HCT116 (cell line): ENCODE measurements at regions of chr21 and their contacts with region 1.

Region 1: GRCh38 chr21:36989699-36990507 is 16.6 kb upstream of the RIPPLY3 start:
- DNase-seq: peak; percentile 81
- ATAC-seq: peak; percentile 94
- H3K4me3 ChIP-seq: peak overlapping the region; percentile 46 to 57
- H3K27ac ChIP-seq: peak overlapping the region; percentile 83
- H3K4me1 ChIP-seq: peaks cover 11 to 25% of the 10 kb centered on the region in 2 experiments
- H3K27me3 ChIP-seq: no peaks in the 10 kb centered on the region
- CTCF ChIP-seq: peak in 2 of 3 experiments; percentile 44 to 69; a peak in 4 of 6 replicates
- POLR2A ChIP-seq: peak; percentile 30
- RAD21 ChIP-seq: no peak

Region 2: DNA sequence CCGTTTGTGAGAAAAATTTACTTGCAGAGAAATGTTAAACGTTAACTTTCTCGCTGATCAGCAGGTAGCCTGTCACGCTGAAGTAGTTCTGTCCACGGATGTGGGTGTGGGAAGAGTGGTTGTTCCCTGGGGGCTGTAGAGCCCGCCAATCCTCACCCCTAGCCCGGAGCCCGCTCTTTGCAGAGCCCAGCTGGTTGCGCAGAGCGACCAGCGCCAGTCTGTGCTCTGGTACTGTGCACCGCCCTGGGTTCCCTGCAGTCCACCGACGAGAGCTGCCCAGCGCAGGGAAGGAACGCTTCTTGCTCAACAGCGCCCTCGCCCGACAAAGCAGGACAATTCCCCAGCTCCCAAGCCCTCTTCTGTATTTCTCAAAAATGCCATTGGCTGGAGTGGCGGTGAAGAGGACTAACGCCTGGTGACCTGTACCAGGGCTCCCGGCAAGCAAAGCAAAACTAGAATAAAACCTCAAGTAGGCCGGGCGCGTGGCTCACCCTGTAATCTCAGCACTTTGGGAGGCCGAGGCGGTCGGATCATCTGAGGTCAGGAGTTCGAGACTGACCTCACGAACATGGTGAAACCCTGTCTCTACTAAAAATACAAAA is 19.9 kb after region 1 on chr21:
- CTCF ChIA-PET with region 1: interaction called, 31 read pairs
- POLR2A ChIA-PET with region 1: interaction called, 10 read pairs
- RAD21 ChIA-PET with region 1: interaction called in 1 of 2 experiments, 4 read pairs
- intact Hi-C with region 1: no loop called
- DNase-seq: peak; percentile 81
- ATAC-seq: peak; percentile 99
- H3K4me3 ChIP-seq: peak overlapping the region; percentile 38 to 63
- H3K27ac ChIP-seq: no peak overlapping the region
- H3K4me1 ChIP-seq: peaks cover 4 to 12% of the 10 kb centered on the region in 2 experiments; a peak in 3 of 4 replicates
- H3K27me3 ChIP-seq: no peaks in the 10 kb centered on the region
- CTCF ChIP-seq: peak; percentile 83 to 87 (median 85)
- POLR2A ChIP-seq: no peak
- RAD21 ChIP-seq: peak; percentile 68

Region 3: GRCh38 chr21:37119421-37120218 is 129.7 kb after region 1 on chr21:
- CTCF ChIA-PET with region 1: no interaction called
- POLR2A ChIA-PET with region 1: no interaction called
- RAD21 ChIA-PET with region 1: no interaction called
- intact Hi-C with region 1: no loop called
- DNase-seq: no peak
- ATAC-seq: peak; percentile 36; the same call in 1 of the 2 replicates
- H3K4me3 ChIP-seq: no peak overlapping the region
- H3K27ac ChIP-seq: no peak overlapping the region
- H3K4me1 ChIP-seq: peaks cover 0 to 12% of the 10 kb centered on the region in 2 experiments; a peak in 2 of 4 replicates
- H3K27me3 ChIP-seq: no peaks in the 10 kb centered on the region
- CTCF ChIP-seq: 0 out of 6 replicates have a peak, but pooled peaks of 1 of the 3 experiments have one; percentile 13
- POLR2A ChIP-seq: no peak
- RAD21 ChIP-seq: no peak